AG04450 (cell line): ENCODE measurements at regions of chr6 and their contacts with region 1.

Region 1: GRCh38 chr6:97215157-97215769 is 67.8 kb downstream of the MMS22L start:
- DNase-seq: peak; percentile 29
- H3K4me3 ChIP-seq: no peak overlapping the region
- H3K27ac ChIP-seq: no peak overlapping the region
- H3K27me3 ChIP-seq: no peaks in the 10 kb centered on the region
- CTCF ChIP-seq: peak; percentile 76

Region 2: DNA sequence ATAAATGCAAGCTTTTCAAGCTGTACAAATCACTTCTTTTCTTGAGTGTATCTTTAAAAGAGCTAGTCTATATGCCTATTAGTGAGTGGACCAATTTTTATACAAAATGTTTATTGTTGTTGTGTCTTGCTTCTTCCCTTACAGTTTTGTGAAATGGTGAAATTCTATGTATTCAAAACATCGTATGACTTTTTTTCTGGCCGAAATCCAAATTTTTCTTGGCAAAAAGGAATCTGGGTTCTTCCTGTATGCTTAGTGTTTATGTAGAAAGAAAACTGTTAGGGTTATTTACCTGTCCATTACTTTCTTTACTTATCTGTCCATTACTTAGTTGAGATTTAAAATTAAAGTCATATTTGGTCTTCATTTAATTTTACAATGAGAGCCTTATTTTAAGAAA is 86.2 kb before region 1 on chr6:
- CTCF ChIA-PET with region 1: no interaction called
- POLR2A ChIA-PET with region 1: no interaction called
- DNase-seq: no peak
- H3K4me3 ChIP-seq: no peak overlapping the region
- H3K27ac ChIP-seq: no peak overlapping the region
- H3K27me3 ChIP-seq: no peaks in the 10 kb centered on the region
- CTCF ChIP-seq: no peak

Region 3: DNA sequence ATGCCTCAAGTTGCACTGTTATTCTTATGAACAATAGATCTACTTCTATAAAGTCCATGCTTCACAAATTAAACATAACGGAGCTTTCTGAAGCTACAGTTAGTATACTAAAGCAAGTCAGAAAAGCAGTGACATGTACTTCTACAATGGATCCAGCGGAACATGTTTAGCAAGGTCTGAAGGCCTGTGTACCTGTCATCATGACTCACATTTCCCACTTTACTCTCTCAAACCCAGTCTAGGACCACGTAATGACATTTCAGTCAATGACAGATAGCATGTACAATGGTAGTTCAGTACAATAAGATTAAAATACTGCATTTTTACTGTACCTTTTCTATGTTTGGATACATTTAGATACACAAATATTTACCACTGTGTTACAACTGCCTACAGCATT is 64.3 kb before region 1 on chr6:
- CTCF ChIA-PET with region 1: no interaction called
- POLR2A ChIA-PET with region 1: no interaction called
- DNase-seq: no peak
- H3K4me3 ChIP-seq: no peak overlapping the region
- H3K27ac ChIP-seq: no peak overlapping the region
- H3K27me3 ChIP-seq: no peaks in the 10 kb centered on the region
- CTCF ChIP-seq: no peak

Region 4: DNA sequence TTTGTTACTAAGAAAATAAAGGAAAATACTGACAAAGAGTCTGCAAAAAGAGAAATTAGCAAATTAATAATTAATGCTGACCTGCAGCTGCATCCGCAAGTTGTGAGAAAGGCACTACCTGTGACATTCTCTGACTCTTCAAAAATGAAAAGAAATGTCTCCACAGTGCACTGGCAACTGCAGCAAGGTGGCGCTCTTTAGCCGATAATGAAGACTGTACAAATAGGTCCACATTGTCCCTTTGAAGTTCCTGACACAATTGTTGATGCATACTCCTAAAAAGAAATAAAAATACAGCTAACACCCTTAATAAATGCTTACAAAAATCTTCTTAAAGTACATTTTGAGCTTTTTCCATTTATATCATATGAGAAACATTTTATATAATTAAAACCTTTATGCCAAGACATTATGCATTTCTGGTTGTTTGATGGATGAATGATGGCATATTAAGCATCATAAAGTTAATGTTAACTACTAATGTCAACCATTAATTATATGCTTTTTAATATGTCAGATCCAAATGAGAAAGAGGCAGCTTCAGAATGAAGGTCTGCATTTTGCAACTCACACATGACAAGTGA is 28.8 kb before region 1 on chr6:
- CTCF ChIA-PET with region 1: interaction called, 129 read pairs
- POLR2A ChIA-PET with region 1: interaction called, 4 read pairs
- DNase-seq: peak; percentile 38
- H3K4me3 ChIP-seq: no peak overlapping the region
- H3K27ac ChIP-seq: no peak overlapping the region
- H3K27me3 ChIP-seq: no peaks in the 10 kb centered on the region
- CTCF ChIP-seq: peak; percentile 95

Region 5: GRCh38 chr6:97231911-97232310 is 16.6 kb after region 1 on chr6:
- CTCF ChIA-PET with region 1: interaction called, 56 read pairs
- POLR2A ChIA-PET with region 1: no interaction called
- DNase-seq: no peak
- H3K4me3 ChIP-seq: no peak overlapping the region
- H3K27ac ChIP-seq: no peak overlapping the region
- H3K27me3 ChIP-seq: no peaks in the 10 kb centered on the region
- CTCF ChIP-seq: no peak

Region 6: DNA sequence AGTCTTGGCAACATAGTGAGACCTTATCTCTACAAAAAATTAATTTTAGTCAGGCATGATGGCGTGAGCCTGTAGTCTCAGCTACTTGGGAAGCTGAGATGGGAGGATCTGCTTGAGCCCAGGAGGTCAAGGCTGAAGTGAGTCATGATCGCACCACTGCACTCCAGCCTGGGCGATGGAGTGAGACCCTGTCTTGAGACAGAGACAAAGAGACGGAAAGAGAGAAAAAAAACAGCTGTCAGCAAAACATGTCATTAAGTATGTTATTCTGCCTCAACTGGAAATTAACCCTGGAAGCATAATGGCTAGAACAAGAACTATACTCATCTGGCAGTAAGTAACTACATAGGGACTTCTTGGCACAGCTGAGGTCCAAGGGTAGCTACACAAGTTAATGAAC is 60.5 kb after region 1 on chr6:
- CTCF ChIA-PET with region 1: interaction called, 10 read pairs
- POLR2A ChIA-PET with region 1: no interaction called
- DNase-seq: no peak
- H3K4me3 ChIP-seq: no peak overlapping the region
- H3K27ac ChIP-seq: no peak overlapping the region
- H3K27me3 ChIP-seq: no peaks in the 10 kb centered on the region
- CTCF ChIP-seq: no peak

Region 7: GRCh38 chr6:97394160-97394748 is 179.0 kb after region 1 on chr6:
- CTCF ChIA-PET with region 1: interaction called, 83 read pairs
- POLR2A ChIA-PET with region 1: no interaction called
- DNase-seq: peak; percentile 15
- H3K4me3 ChIP-seq: no peak overlapping the region
- H3K27ac ChIP-seq: no peak overlapping the region
- H3K27me3 ChIP-seq: no peaks in the 10 kb centered on the region
- CTCF ChIP-seq: peak; percentile 96